ENCODE measurements at regions of chr10 and their contacts with region 1.

Region 1: GRCh38 chr10:63976538-63976937 is 455.3 kb downstream of the REEP3 start:
- DNase-seq: peak; percentile 69
- ATAC-seq: peak; percentile 90
- H3K4me3 Mint-ChIP-seq: no peak overlapping the region
- H3K27ac Mint-ChIP-seq: no peak overlapping the region
- H3K4me1 Mint-ChIP-seq: no peaks in the 10 kb centered on the region
- H3K27me3 Mint-ChIP-seq: no peaks in the 10 kb centered on the region
- CTCF ChIP-seq: peak; percentile 42

Region 2: GRCh38 chr10:63829020-63829419 is 147.5 kb before region 1 on chr10:
- CTCF ChIA-PET with region 1: no interaction called
- POLR2A ChIA-PET with region 1: no interaction called
- intact Hi-C with region 1: no loop called
- DNase-seq: no peak
- ATAC-seq: no peak
- H3K4me3 Mint-ChIP-seq: no peak overlapping the region
- H3K27ac Mint-ChIP-seq: no peak overlapping the region
- H3K4me1 Mint-ChIP-seq: no peaks in the 10 kb centered on the region
- H3K27me3 Mint-ChIP-seq: peaks cover 8% of the 10 kb centered on the region
- CTCF ChIP-seq: no peak

Region 3: DNA sequence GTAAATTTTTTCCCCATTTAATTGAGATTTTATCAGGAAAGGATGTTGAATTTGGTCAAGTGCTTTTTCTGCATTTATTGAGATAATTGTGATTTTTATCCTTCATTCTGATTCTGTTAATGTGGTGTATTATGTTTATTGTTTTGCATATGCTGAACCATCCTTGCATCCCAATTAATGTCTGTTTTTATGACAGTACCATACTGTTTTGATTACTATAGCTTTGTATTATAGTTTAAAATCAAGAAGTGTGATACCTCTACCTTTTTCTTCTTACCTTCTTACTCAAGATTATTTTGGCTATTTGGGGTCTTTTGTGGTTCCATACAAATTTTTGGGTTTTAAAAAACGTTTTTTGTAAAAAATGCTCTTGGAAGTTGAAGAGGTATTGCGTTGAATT is 98.1 kb before region 1 on chr10:
- CTCF ChIA-PET with region 1: interaction called, 10 read pairs
- POLR2A ChIA-PET with region 1: no interaction called
- intact Hi-C with region 1: no loop called
- DNase-seq: no peak
- ATAC-seq: no peak
- H3K4me3 Mint-ChIP-seq: no peak overlapping the region
- H3K27ac Mint-ChIP-seq: no peak overlapping the region
- H3K4me1 Mint-ChIP-seq: no peaks in the 10 kb centered on the region
- H3K27me3 Mint-ChIP-seq: no peaks in the 10 kb centered on the region
- CTCF ChIP-seq: no peak

Measured in activated CD8-positive, alpha-beta T cell treated with anti-CD3 and anti-CD28 coated beads for 36 hours (primary cell).